ENCODE measurements at regions of chr7 and their contacts with region 1.

Region 1: GRCh38 chr7:4610768-4611467 is 71.2 kb upstream of the FOXK1 start:
- DNase-seq: no peak
- ATAC-seq: peak; percentile 72

Region 2: DNA sequence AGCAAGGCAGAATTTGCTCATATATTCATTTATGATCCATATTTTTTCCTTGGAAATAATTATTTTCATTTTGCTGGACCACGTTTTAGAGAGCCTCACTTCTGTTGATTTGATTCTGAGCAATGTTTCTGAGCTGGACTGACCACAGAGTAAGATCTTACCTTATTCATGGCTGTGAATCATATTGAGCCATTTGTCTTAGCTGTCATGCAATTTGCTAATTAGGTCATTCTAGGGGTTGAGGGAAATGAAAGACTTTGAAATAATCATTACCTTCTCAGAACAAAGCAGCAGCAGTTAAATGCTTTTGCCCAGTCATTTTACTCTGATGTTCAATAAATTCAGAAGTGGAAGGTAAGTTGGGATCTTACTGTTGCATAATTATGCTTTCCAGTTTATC is 1058.4 kb before region 1 on chr7:
- intact Hi-C with region 1: no loop called
- DNase-seq: no peak
- ATAC-seq: no peak

Region 3: DNA sequence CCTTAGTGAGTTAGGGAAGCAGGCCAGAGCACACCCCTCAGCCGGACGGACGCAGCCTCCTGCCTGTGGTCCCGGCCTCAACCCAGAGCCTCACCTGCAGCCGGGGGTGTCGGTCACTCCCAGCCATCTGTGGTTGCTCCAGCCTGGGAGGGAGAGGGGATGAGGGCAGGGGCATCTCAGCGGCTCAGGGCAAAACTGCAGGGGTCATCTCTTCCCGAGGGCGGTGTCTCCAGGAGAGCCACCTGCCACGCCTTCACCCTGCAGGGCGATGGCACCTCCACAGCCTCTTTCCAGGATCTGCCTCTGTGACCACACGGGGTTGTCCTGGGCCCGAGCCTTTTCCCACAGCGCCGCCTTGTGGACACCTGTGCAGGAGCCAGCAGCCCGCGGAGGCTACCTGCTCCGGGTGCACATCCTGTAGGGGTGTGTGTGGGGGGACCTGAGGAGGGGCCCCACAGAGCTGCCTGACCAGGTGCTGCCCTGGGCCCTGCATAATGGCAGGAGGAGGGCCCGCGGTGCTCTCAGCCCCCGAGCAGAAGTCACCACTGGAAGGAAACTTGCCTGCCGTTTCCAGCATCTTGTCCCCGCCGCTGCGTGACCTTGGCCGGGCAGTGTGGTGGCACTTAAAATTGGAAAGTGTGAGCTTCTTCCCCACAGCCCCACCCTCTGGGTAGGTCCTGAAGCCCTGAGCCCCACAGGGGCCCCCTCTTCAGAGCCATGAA is 143.0 kb after region 1 on chr7:
- intact Hi-C with region 1: loop called (anchors 10 kb)
- DNase-seq: peak; percentile 87
- ATAC-seq: peak; percentile 86

Region 4: DNA sequence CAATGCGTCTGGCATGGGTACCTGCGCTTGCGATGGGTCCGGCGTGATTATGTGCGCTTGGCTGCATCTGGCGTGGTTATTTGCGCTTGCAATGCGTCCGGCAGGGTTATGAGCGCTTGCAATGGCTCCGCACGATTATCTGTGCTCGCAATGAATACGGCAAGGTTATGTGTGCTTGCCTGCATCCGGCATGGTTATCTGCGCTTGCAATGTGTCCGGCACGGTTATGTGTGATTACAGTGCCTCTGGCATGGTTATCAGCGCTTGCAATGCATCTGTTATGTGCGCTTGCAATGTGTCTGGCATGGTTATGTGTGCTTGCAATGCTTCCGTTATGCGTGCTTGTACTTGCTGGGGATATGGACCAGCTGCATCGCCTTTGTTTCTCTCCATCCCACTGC is 472.4 kb after region 1 on chr7:
- intact Hi-C with region 1: loop called (anchors 10 kb)
- DNase-seq: no peak
- ATAC-seq: no peak